HepG2 (cell line): ENCODE measurements at regions of chr1 and their contacts with region 1.

Region 1: DNA sequence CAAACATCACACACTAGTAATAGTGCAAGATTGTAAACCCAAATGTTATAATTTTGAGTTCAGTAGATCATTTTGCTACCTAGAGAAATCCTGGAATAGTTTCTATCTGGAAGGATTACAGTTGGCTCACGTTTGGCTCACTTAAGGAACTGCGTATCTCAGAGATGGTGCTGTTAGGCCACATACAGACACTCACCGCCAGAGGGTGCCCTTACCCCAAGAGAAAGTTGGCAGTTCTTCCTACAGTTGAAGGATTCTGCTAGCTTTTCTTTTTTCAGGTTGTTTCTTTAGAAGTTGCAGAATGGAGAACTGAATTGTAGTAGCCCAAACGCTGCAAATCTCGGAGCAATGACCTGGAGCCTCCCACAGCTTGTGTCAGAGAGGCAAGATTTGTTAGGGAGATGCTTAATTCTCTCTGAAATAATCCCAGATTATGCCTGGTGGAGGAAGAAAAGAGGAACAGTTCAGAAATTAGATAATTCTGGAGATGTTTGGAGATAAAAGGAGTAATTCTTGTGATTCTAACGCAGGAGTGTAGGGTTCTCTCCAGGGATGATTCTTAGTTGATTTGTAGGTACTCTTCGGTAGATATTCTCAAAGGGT is 87.9 kb upstream of the PAPPA2 start:
- DNase-seq: peak; percentile 37
- ATAC-seq: peak; percentile 82
- H3K4me3 ChIP-seq: no peak overlapping the region
- H3K27ac ChIP-seq: no peak overlapping the region
- H3K4me1 ChIP-seq: no peaks in the 10 kb centered on the region
- H3K27me3 ChIP-seq: no peaks in the 10 kb centered on the region
- CTCF ChIP-seq: peak; percentile 83
- EP300 ChIP-seq: no peak
- POLR2A ChIP-seq: no peak
- RAD21 ChIP-seq: peak; percentile 65

Region 2: DNA sequence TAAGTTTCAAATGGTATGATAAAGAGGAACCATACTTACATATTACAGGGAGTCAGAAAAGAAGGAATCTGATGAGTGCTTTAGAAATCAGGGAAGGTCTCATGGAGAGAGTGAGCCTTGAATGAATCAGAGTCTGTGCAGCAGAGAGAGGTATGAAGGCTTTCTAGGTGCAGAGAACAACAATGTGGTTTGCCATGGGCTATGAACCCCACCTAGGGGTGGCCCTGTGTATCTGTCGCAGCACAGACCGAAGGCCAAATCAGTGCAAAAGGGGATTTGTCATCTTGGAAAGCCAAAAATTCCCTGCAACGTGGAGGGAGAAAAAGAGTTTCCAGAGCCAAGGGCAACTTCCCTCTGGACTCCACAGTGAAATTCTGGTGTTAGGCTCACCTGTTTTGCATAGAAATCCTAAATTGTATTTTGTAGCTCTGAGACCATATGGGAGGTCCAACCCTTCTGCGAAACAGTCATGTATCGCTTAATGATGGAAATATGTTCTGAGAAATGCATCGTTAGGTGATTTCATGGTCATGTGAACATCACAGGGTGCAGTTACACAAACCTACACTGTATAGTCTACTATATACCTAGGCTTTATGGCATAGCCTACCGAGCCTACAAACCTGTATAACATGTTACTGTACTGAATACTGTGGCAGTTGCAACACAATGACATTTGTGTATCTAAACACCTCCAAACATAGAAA is 91.6 kb after region 1 on chr1:
- CTCF ChIA-PET with region 1: no interaction called
- POLR2A ChIA-PET with region 1: no interaction called
- in situ Hi-C with region 1: no loop called
- intact Hi-C with region 1: loop called (anchors 1 kb)
- DNase-seq: peak; percentile 19
- ATAC-seq: peak; percentile 98
- H3K4me3 ChIP-seq: no peak overlapping the region
- H3K27ac ChIP-seq: no peak overlapping the region
- H3K4me1 ChIP-seq: peaks cover 9% of the 10 kb centered on the region
- H3K27me3 ChIP-seq: no peaks in the 10 kb centered on the region
- CTCF ChIP-seq: peak; percentile 70
- EP300 ChIP-seq: no peak
- POLR2A ChIP-seq: no peak
- RAD21 ChIP-seq: no peak

Region 3: DNA sequence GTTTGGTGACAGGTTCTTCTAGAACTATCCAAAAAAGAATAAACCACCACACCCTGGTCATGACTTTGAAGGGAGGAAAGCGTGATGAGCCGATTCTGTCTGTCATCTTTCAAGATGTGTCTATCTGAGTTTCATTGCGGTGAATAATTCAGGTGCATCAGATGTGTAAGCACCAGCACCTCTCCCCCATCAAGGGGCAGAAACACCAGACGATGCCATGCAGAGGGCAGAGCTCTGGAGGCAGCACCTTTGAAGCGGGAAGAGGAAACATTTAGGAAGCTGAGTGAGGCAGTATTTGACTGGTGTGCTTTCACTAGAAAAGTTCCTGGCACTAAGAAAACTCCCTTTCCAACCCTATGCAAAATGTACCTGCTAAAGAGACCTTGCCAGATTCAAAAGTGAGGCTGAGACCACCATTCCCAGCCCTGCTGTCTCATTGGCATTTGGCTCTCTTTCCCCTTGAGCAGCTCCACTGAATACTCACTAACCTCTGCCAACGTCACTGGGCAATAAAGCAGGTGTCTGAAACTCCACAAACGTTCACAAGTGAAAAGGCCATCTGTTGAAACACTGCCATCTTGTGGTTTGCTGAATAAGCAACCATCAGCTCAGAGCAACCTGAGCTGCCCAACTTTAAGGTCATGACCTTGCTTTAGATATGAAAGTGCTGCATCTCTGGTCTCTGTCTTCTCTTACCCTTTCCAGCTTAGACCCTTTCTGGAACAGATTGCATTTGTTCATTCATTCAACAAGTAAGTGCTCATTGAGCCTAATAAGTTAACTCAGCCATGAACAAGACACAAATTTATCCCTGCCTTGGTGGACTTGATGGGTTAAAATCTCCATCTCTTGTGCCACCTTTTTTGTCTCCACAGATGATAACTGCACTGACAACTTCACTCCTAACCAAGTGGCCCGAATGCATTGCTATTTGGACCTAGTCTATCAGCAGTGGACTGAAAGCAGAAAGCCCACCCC is 316.5 kb after region 1 on chr1:
- CTCF ChIA-PET with region 1: interaction called, 3 read pairs
- POLR2A ChIA-PET with region 1: no interaction called
- in situ Hi-C with region 1: loop called (anchors 25 kb)
- intact Hi-C with region 1: no loop called
- DNase-seq: peak; percentile 52
- ATAC-seq: peak; percentile 88
- H3K4me3 ChIP-seq: no peak overlapping the region
- H3K27ac ChIP-seq: no peak overlapping the region
- H3K4me1 ChIP-seq: no peaks in the 10 kb centered on the region
- H3K27me3 ChIP-seq: no peaks in the 10 kb centered on the region
- CTCF ChIP-seq: peak; percentile 84
- EP300 ChIP-seq: no peak
- POLR2A ChIP-seq: no peak
- RAD21 ChIP-seq: no peak

Region 4: GRCh38 chr1:176843352-176844297 is 468.6 kb after region 1 on chr1:
- CTCF ChIA-PET with region 1: interaction called, 4 read pairs
- POLR2A ChIA-PET with region 1: no interaction called
- in situ Hi-C with region 1: loop called (anchors 25 kb)
- intact Hi-C with region 1: no loop called
- DNase-seq: peak; percentile 7
- ATAC-seq: no peak; the same call in 2 of the 3 replicates
- H3K4me3 ChIP-seq: no peak overlapping the region
- H3K27ac ChIP-seq: no peak overlapping the region
- H3K4me1 ChIP-seq: no peaks in the 10 kb centered on the region
- H3K27me3 ChIP-seq: no peaks in the 10 kb centered on the region
- CTCF ChIP-seq: peak; percentile 50
- EP300 ChIP-seq: no peak
- POLR2A ChIP-seq: no peak
- RAD21 ChIP-seq: no peak

Region 5: DNA sequence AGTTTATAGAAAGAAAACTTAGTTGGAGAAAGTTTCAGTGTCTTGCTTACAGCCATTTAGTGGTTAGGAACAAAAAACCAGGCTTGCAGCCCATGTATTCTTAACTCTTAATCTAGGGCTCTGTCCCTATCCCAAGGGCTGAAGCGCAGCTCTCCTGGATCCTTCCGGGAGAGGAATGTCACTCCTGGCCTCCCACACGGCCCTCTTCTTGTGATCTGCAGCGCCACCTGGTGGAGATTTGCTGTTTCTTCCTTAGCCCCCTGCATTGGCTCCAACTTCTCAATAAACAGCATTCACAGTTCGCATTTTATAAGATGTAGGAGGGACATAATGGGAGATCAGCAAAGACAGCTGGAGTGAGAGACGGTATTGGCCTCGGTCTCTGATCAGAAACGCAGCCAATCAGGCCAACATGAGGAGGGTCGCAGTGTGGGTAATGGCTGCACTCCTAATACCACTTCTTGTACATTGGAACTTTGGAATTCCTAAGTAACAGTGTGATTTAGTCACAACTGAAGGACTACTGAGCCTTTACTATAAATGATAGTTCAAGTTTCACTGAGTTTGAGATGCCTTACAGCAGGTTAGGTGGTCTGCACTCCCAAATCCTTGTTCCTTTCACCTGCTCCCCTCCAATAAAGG is 506.0 kb after region 1 on chr1:
- CTCF ChIA-PET with region 1: interaction called, 4 read pairs
- POLR2A ChIA-PET with region 1: no interaction called
- in situ Hi-C with region 1: loop called (anchors 10 kb)
- intact Hi-C with region 1: no loop called
- DNase-seq: peak; percentile 52
- ATAC-seq: peak; percentile 95
- H3K4me3 ChIP-seq: no peak overlapping the region
- H3K27ac ChIP-seq: no peak overlapping the region
- H3K4me1 ChIP-seq: no peaks in the 10 kb centered on the region
- H3K27me3 ChIP-seq: 0 out of 5 replicates have a peak, but pooled peaks cover 0 to 3% of the 10 kb centered on the region in 2 experiments
- CTCF ChIP-seq: peak; percentile 84
- EP300 ChIP-seq: no peak
- POLR2A ChIP-seq: no peak
- RAD21 ChIP-seq: peak; percentile 53